GM12878 (cell line): ENCODE measurements at regions of chr6 and their contacts with region 1.

Region 1: GRCh38 chr6:37169496-37170272 is at the start of gene PIM1:
- DNase-seq: peak; percentile 62
- ATAC-seq: peak; percentile 88
- H3K4me3 ChIP-seq: peak within 1 kb of the TSS; percentile 83
- H3K27ac ChIP-seq: peak within 1 kb of the TSS; percentile 65
- H3K4me1 ChIP-seq: peaks cover 16% of the 10 kb centered on the region
- H3K27me3 ChIP-seq: no peaks in the 10 kb centered on the region
- CTCF ChIP-seq: peak in 1 of 3 experiments; percentile 6; a peak in 1 of 6 replicates
- EP300 ChIP-seq: no peak
- POLR2A ChIP-seq: peak; percentile 81
- RAD21 ChIP-seq: no peak
- polyA plus RNA-seq, gene PIM1: 0.66 to 3.0 TPM

Region 2: DNA sequence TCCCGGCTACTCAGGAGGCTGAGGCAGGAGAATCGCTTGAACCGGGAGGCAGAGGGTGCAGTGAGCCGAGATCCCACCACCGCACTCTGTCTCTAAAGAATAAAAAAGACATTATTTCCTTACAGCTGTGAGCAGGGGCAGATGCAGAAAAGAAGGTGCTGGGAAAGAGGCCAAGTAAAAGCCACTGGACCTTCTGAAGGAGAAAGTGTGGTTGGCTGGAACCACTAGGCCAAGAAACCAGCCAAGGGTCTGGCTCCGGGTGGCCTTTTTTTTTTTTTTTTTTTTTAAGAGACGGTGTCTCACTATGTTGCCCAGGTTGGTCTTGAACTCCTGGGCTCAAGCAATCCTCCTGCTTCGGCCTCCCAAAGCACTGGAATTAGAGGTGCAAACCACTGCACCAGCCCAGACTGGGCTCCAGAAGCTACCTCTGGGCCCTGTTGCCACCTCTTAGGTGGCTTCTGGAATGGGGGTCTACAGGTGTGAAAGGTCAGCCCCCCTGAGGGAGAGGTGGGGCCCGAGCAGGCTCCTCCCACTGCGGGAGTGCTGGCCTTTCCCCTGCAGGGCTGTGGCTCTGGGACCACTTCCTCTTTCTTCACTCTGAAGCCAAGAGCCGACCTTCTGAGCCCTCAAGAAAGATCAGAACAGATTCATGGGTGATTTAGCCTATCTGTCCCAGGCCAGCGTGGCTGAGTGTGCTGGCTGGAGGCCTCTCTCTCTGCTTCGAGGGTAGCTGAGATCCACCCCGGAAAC is 164.4 kb before region 1 on chr6 and contains the start of gene FGD2:
- CTCF ChIA-PET with region 1: interaction called, 14 read pairs
- POLR2A ChIA-PET with region 1: no interaction called
- RAD21 ChIA-PET with region 1: interaction called, 18 read pairs
- SMC1A ChIA-PET with region 1: interaction called, 13 read pairs
- in situ Hi-C with region 1: no loop called
- intact Hi-C with region 1: no loop called
- DNase-seq: no peak
- ATAC-seq: peak; percentile 87
- H3K4me3 ChIP-seq: peak within 1 kb of the TSS; percentile 81
- H3K27ac ChIP-seq: peak within 1 kb of the TSS; percentile 88
- H3K4me1 ChIP-seq: peaks cover 38% of the 10 kb centered on the region
- H3K27me3 ChIP-seq: no peaks in the 10 kb centered on the region
- CTCF ChIP-seq: no peak
- EP300 ChIP-seq: peak; percentile 23 to 50; a peak in 1 of 4 replicates
- POLR2A ChIP-seq: peak; percentile 75
- RAD21 ChIP-seq: no peak
- polyA plus RNA-seq, gene FGD2: 5.2 to 11.3 TPM

Region 3: DNA sequence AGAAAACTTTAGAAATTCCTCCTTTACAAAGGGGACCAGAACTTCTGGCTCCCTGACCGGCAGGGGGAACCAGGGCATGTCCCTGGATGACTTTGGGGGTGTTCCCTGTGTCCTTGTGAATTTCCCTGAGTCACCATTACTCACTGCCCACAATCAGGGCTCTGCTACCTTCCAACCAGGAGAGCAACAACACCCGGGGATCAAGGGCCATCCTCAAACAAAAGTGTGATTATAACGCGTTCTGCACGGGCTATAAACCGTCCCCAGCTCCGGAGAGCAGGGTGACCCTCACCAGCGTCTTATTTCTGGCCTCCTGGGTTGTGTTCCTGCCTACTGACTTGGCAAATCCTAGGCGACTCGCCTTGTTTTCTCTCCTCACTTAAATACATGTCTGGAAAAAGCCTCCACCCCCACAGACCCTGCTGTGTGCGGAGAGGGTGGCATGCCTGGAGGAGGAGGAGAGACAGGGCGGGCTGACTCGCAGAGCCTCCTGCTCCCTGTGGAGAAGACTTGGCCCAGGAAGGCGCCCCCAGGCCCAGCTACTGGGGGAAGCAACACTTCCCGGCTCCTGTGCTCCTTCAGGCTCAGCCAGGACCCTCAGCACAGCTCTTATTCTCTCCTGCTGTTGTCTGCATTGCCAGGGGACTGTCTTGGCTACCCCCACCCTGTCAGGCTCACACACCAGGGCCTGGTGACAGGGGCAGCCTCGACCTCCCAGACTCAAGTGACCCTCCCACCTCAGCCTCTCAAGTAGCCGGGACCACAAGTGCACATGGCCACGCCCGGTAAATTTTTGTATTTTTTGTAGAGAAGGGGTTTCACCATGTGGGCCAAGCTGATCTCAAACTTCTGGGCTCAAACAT is 110.1 kb before region 1 on chr6:
- CTCF ChIA-PET with region 1: interaction called, 260 read pairs
- POLR2A ChIA-PET with region 1: interaction called, 3 read pairs
- RAD21 ChIA-PET with region 1: interaction called, 255 read pairs
- SMC1A ChIA-PET with region 1: interaction called, 266 read pairs
- in situ Hi-C with region 1: loop called (anchors 5 kb)
- intact Hi-C with region 1: no loop called
- DNase-seq: no peak
- ATAC-seq: no peak
- H3K4me3 ChIP-seq: no peak overlapping the region
- H3K27ac ChIP-seq: no peak overlapping the region
- H3K4me1 ChIP-seq: no peaks in the 10 kb centered on the region
- H3K27me3 ChIP-seq: no peaks in the 10 kb centered on the region
- CTCF ChIP-seq: peak in 1 of 3 experiments; percentile 22; a peak in 2 of 6 replicates
- EP300 ChIP-seq: no peak
- POLR2A ChIP-seq: no peak
- RAD21 ChIP-seq: no peak

Region 4: DNA sequence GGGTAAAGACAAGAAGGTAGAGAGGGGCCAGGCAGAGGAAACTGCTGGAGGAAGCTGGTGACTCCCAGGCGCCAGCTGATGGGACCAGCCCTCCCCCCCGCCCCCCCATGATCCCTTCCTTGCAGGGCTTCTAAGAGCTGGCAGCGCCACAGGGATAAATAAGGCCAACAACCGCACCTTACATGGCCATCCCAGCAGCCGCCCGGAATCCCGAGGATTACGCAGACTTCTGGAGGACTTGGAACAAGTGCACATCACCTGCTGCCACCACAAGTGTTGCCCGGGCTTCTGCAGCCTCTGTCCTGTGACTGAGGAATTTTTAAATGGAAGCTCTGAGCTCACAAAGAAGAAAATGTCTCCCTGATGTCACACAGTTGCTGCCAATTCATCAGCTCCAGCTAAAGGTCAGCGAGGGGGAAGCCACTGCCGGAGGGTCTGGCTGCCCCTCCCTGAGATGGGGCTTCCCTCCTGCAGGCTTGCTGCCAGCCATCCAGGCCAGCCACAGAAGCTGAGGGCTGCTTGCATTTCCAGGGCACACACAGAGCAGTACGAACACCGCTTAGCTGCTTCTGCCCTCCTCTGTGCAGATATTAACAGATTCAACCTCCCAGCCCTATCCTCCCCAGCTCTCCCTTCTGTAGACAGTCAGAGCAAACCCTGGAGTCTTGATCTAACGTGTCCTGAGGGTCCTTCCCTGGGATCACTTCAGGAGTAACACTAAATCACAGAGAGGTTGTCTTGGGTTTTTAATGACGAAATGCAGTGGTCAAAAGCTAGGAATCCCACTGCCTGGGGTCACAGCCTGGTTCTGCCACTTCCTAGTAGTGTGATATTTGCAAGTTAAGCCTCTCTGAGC is 38.4 kb before region 1 on chr6:
- CTCF ChIA-PET with region 1: interaction called, 15 read pairs
- POLR2A ChIA-PET with region 1: interaction called, 3 read pairs
- RAD21 ChIA-PET with region 1: interaction called, 41 read pairs
- SMC1A ChIA-PET with region 1: interaction called, 17 read pairs
- in situ Hi-C with region 1: no loop called
- intact Hi-C with region 1: no loop called
- DNase-seq: no peak
- ATAC-seq: no peak
- H3K4me3 ChIP-seq: no peak overlapping the region
- H3K27ac ChIP-seq: no peak overlapping the region
- H3K4me1 ChIP-seq: peaks cover 15% of the 10 kb centered on the region; the same call in 1 of the 2 replicates
- H3K27me3 ChIP-seq: no peaks in the 10 kb centered on the region
- CTCF ChIP-seq: no peak
- EP300 ChIP-seq: no peak
- POLR2A ChIP-seq: no peak
- RAD21 ChIP-seq: no peak

Region 5: DNA sequence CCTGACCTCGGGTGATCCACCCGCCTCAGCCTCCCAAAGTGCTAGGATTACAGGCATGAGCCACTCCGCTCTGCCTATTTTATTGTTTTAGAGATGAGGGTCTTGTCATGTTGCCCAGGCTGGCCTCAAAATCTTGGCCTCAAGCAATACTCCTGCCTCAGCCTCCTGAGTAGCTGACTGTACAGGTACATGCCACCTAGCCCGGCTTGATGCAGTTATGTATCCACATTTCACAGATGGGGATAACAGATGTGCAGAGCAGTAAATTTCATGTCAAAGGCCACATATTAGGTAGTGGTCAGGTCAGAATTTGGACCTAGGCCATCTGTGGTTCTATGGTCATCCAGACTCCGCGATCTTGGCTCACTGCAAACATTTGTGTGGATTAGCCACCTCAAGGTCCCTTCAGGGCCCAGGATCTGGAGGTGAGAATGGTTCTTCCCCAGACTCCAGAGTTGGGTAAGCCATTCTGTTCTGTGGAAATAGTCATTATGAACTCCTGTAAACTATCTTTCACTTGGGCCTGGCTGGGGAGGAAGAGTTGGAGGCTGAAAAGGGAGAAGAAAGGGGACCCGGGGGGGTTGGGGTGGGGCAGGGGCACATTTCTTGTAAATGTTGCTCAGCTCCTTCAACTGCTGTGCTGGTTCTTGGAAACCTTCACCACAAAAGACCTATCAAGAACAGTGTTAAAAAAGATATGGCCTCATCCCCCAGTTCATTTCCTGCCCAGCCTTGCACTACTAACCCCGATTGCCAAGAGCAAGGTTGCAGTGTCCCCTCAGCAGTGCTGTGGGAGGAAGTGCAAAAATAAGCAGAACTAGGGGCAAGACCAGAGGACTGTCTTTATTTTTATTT is 13.3 kb after region 1 on chr6:
- CTCF ChIA-PET with region 1: interaction called, 6 read pairs
- POLR2A ChIA-PET with region 1: no interaction called
- RAD21 ChIA-PET with region 1: interaction called, 3 read pairs
- SMC1A ChIA-PET with region 1: interaction called, 13 read pairs
- in situ Hi-C with region 1: no loop called
- intact Hi-C with region 1: no loop called
- DNase-seq: peak; percentile 32
- ATAC-seq: peak; percentile 80
- H3K4me3 ChIP-seq: no peak overlapping the region
- H3K27ac ChIP-seq: 0 out of 2 replicates have a peak overlapping the region, but pooled peaks have one; percentile 33
- H3K4me1 ChIP-seq: 0 out of 2 replicates have a peak, but pooled peaks cover 3% of the 10 kb centered on the region
- H3K27me3 ChIP-seq: no peaks in the 10 kb centered on the region
- CTCF ChIP-seq: no peak
- EP300 ChIP-seq: no peak
- POLR2A ChIP-seq: no peak
- RAD21 ChIP-seq: 0 out of 2 replicates have a peak, but pooled peaks have one; percentile 8

Region 6: DNA sequence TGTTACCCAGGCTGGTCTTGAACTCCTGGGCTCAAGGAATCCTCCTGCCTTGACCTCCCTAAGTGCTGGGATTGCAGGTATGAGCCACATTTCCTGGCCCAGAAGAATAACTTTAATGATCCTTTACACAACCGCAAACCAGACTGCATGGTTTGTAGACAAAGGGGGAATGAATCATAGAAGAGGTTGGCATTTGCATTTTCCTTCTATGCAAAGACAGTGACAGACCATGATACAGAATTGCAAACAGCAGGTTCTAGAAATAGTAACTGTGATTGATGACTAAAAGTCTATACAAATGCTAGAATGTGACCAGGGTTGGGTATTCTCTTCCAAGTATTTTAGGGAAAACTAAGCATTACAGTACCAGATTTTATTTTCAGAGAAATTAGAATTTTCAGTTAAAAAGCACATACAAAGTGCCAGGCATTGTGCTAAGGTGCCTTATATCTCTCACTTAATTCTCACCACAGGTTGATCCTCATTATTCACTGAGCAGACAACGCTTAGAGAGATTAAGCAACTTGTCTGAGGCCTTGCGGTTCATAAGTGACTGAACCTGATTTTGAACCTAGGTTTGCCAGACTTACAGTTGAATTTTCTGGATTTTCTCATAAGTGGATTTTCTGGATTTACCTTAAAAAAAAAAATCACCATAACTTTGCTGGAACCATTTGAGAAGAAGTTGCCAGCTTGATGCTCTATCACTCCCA is 796.4 kb after region 1 on chr6:
- CTCF ChIA-PET with region 1: no interaction called
- POLR2A ChIA-PET with region 1: no interaction called
- RAD21 ChIA-PET with region 1: no interaction called
- SMC1A ChIA-PET with region 1: no interaction called
- in situ Hi-C with region 1: no loop called
- intact Hi-C with region 1: no loop called
- DNase-seq: no peak
- ATAC-seq: peak; percentile 70
- H3K4me3 ChIP-seq: no peak overlapping the region
- H3K27ac ChIP-seq: no peak overlapping the region
- H3K4me1 ChIP-seq: peaks cover 8% of the 10 kb centered on the region
- H3K27me3 ChIP-seq: no peaks in the 10 kb centered on the region
- CTCF ChIP-seq: no peak
- EP300 ChIP-seq: no peak
- POLR2A ChIP-seq: no peak
- RAD21 ChIP-seq: no peak